Common myeloid progenitor, CD34-positive (primary cell): ENCODE measurements at regions of chr3 and their contacts with region 1.

Region 1: DNA sequence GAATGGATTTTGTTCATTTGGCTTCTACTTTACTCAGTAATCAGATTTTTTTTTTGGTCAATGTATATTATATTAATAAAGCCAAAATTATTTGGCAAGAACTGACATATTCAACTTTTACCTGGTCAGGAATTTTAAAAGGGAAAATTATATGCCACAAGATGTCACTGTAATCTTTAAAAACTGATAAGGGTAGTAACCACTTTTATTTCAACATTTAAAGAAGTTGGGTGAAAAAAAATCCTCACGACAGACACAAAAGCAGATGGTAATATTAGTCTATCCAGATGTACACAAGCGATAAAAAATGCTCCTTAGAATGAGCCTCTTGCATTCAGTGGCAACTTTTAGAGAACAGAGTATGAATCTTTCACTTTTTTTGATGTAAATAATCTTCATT is 101.9 kb downstream of the SERPINI1 start:
- DNase-seq: peak; percentile 16 to 55 (median 45)
- H3K4me3 ChIP-seq: no peak overlapping the region
- H3K27ac ChIP-seq: no peak overlapping the region
- H3K4me1 ChIP-seq: peaks cover 0 to 4% (median 2%) of the 10 kb centered on the region in 4 experiments
- H3K27me3 ChIP-seq: no peaks in the 10 kb centered on the region

Region 2: DNA sequence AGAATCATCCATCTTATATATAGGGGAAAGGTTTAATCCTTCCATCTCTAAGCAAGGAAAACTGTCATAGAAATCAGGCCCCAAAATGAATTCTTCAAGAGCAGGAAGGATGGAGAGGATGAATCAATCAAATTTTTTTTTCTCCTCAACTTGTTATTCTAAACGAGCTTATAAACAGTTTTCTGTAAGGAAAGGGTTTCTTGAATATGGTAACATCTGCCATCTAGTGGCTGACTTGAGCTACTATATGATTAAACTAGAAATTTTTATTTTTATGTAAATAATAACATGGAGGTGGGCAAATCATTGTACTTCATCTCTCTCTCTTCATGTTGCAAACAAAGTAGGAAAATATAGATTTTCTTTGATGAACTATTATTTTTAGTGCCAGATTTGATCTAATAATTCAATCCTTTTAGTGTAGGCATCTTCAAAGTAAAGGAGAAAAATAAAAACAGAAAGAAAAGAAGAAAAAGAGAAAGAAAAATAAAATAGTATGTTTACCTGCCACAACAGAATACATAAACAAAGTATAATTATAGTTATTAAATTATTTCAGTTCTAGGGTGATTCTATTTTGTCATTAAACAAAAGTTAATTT is 44.7 kb after region 1 on chr3:
- CTCF ChIA-PET with region 1: interaction called, 16 read pairs
- POLR2A ChIA-PET with region 1: no interaction called
- DNase-seq: peak; percentile 65 to 83 (median 81)
- H3K4me3 ChIP-seq: peak overlapping the region in 1 of 7 experiments; percentile 31
- H3K27ac ChIP-seq: no peak overlapping the region
- H3K4me1 ChIP-seq: peaks cover 0 to 2% (median under 1%) of the 10 kb centered on the region in 4 experiments
- H3K27me3 ChIP-seq: no peaks in the 10 kb centered on the region